Naive thymus-derived CD4-positive, alpha-beta T cell (primary cell): ENCODE measurements at regions of chr2 and their contacts with region 1.

Region 1: GRCh38 chr2:203706403-203706802 is at the start of gene CD28:
- DNase-seq: peak; percentile 59 to 96 (median 94)
- ATAC-seq: peak; percentile 90
- H3K4me3 ChIP-seq: peak within 1 kb of the TSS; percentile 70
- H3K4me3 Mint-ChIP-seq: peak within 1 kb of the TSS; percentile 82 to 97 (median 94)
- H3K27ac ChIP-seq: peak within 1 kb of the TSS; percentile 95
- H3K27ac Mint-ChIP-seq: peak within 1 kb of the TSS; percentile 92 to 99 (median 97)
- H3K4me1 ChIP-seq: peaks cover 30 to 39% of the 10 kb centered on the region in 2 donors
- H3K4me1 Mint-ChIP-seq: peaks cover 13 to 50% (median 41%) of the 10 kb centered on the region in 7 donors
- H3K27me3 ChIP-seq: no peaks in the 10 kb centered on the region
- H3K27me3 Mint-ChIP-seq: no peaks in the 10 kb centered on the region
- total RNA-seq, gene CD28: 66.7 to 224 (median 121) TPM

Region 2: GRCh38 chr2:203578759-203579643 is 127.4 kb before region 1 on chr2:
- CTCF ChIA-PET with region 1: no interaction called
- POLR2A ChIA-PET with region 1: no interaction called
- intact Hi-C with region 1: loop called in 1 of 2 experiments (anchors 1 kb)
- DNase-seq: peak in 1 of 9 donors; percentile 47
- ATAC-seq: no peak
- H3K4me3 ChIP-seq: no peak overlapping the region
- H3K4me3 Mint-ChIP-seq: peak overlapping the region in 1 of 10 donors; percentile 63
- H3K27ac ChIP-seq: no peak overlapping the region
- H3K27ac Mint-ChIP-seq: peak overlapping the region in 2 of 9 donors; percentile 8 to 47
- H3K4me1 ChIP-seq: peaks cover 0 to 2% of the 10 kb centered on the region in 2 donors
- H3K4me1 Mint-ChIP-seq: peaks cover 0 to 44% (median 0%) of the 10 kb centered on the region in 7 donors
- H3K27me3 ChIP-seq: no peaks in the 10 kb centered on the region
- H3K27me3 Mint-ChIP-seq: peaks cover 0 to 64% (median 0%) of the 10 kb centered on the region in 5 donors

Region 3: GRCh38 chr2:203683932-203684556 is 22.4 kb before region 1 on chr2:
- CTCF ChIA-PET with region 1: interaction called, 3 read pairs
- POLR2A ChIA-PET with region 1: interaction called, 5 read pairs
- intact Hi-C with region 1: loop called in 1 of 2 experiments (anchors 2 kb)
- DNase-seq: no peak
- ATAC-seq: peak; percentile 81
- H3K4me3 ChIP-seq: no peak overlapping the region
- H3K4me3 Mint-ChIP-seq: no peak overlapping the region
- H3K27ac ChIP-seq: no peak overlapping the region
- H3K27ac Mint-ChIP-seq: peak overlapping the region in 1 of 9 donors; percentile 4
- H3K4me1 ChIP-seq: peaks cover 3 to 18% of the 10 kb centered on the region in 2 donors
- H3K4me1 Mint-ChIP-seq: peaks cover 21 to 54% (median 32%) of the 10 kb centered on the region in 7 donors
- H3K27me3 ChIP-seq: no peaks in the 10 kb centered on the region
- H3K27me3 Mint-ChIP-seq: no peaks in the 10 kb centered on the region

Region 4: GRCh38 chr2:203730076-203730729 is 23.8 kb after region 1 on chr2:
- CTCF ChIA-PET with region 1: interaction called, 4 read pairs
- POLR2A ChIA-PET with region 1: interaction called, 15 read pairs
- intact Hi-C with region 1: loop called in 1 of 2 experiments (anchors 1 kb)
- DNase-seq: no peak
- ATAC-seq: peak; percentile 39
- H3K4me3 ChIP-seq: no peak overlapping the region
- H3K4me3 Mint-ChIP-seq: peak overlapping the region in 9 of 10 donors; percentile 23 to 81 (median 67)
- H3K27ac ChIP-seq: peak overlapping the region; percentile 43
- H3K27ac Mint-ChIP-seq: peak overlapping the region; percentile 86 to 95 (median 90)
- H3K4me1 ChIP-seq: peaks cover 64 to 82% of the 10 kb centered on the region in 2 donors
- H3K4me1 Mint-ChIP-seq: peaks cover 45 to 96% (median 91%) of the 10 kb centered on the region in 7 donors
- H3K27me3 ChIP-seq: no peaks in the 10 kb centered on the region
- H3K27me3 Mint-ChIP-seq: no peaks in the 10 kb centered on the region

Region 5: GRCh38 chr2:203804070-203804469 is 97.7 kb after region 1 on chr2:
- CTCF ChIA-PET with region 1: no interaction called
- POLR2A ChIA-PET with region 1: interaction called, 4 read pairs
- intact Hi-C with region 1: loop called in 1 of 2 experiments (anchors 2 kb)
- DNase-seq: peak in 8 of 9 donors; percentile 27 to 57 (median 42)
- ATAC-seq: peak; percentile 75
- H3K4me3 ChIP-seq: peak overlapping the region; percentile 12
- H3K4me3 Mint-ChIP-seq: peak overlapping the region; percentile 23 to 80 (median 63)
- H3K27ac ChIP-seq: peak overlapping the region; percentile 47
- H3K27ac Mint-ChIP-seq: peak overlapping the region; percentile 1 to 83 (median 76)
- H3K4me1 ChIP-seq: peaks cover 28 to 34% of the 10 kb centered on the region in 2 donors
- H3K4me1 Mint-ChIP-seq: peaks cover 27 to 83% (median 72%) of the 10 kb centered on the region in 7 donors
- H3K27me3 ChIP-seq: no peaks in the 10 kb centered on the region
- H3K27me3 Mint-ChIP-seq: peaks cover 0 to 3% (median 0%) of the 10 kb centered on the region in 5 donors

Region 6: DNA sequence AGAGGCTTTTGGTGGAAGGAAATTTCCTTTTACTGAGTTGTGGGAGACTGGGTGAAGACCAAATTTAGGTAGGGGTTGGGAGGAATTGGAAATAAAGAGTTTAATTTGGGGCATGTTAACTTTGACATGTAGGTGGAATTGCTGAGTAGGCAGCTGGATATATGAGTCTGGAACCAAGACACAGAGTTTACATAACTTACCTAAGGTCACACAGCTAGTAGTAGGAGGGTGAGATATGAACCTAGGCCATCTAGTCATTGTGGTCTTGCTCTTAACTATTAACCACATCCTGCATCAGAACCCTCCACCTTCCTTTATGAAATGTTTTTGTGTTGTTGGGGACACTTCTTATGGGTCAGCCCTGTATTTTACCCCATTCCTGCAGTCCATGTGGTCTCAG is 343.2 kb after region 1 on chr2:
- CTCF ChIA-PET with region 1: no interaction called
- POLR2A ChIA-PET with region 1: no interaction called
- intact Hi-C with region 1: no loop called
- DNase-seq: no peak
- ATAC-seq: peak; percentile 61
- H3K4me3 ChIP-seq: no peak overlapping the region
- H3K4me3 Mint-ChIP-seq: no peak overlapping the region
- H3K27ac ChIP-seq: no peak overlapping the region
- H3K27ac Mint-ChIP-seq: peak overlapping the region in 1 of 9 donors; percentile 2
- H3K4me1 ChIP-seq: no peaks in the 10 kb centered on the region
- H3K4me1 Mint-ChIP-seq: peaks cover 5 to 22% (median 10%) of the 10 kb centered on the region in 7 donors
- H3K27me3 ChIP-seq: no peaks in the 10 kb centered on the region
- H3K27me3 Mint-ChIP-seq: peaks cover 0 to 13% (median 0%) of the 10 kb centered on the region in 5 donors

Region 7: DNA sequence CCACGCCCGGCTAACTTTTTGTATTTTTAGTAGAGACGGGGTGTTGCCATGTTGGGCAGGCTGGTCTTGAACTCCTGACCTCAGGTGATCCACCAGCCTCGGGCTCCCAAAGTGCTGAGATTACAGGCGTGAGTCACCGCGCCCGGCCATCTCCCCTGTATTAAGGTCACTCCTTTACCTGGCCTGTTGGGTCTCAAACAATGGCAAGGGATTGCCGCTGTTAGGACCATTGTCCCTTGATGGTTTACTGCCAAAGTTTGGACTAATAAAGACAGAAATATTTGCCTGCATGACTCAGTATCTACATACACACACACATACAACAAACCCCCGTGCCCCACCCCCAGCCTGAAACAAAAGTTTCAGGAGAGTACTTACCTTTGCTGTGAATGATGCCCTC is 855.3 kb after region 1 on chr2:
- CTCF ChIA-PET with region 1: no interaction called
- POLR2A ChIA-PET with region 1: no interaction called
- intact Hi-C with region 1: no loop called
- DNase-seq: no peak
- ATAC-seq: no peak
- H3K4me3 ChIP-seq: no peak overlapping the region
- H3K4me3 Mint-ChIP-seq: no peak overlapping the region
- H3K27ac ChIP-seq: no peak overlapping the region
- H3K27ac Mint-ChIP-seq: no peak overlapping the region
- H3K4me1 ChIP-seq: no peaks in the 10 kb centered on the region
- H3K4me1 Mint-ChIP-seq: no peaks in the 10 kb centered on the region
- H3K27me3 ChIP-seq: no peaks in the 10 kb centered on the region
- H3K27me3 Mint-ChIP-seq: peaks cover 2 to 13% (median 10%) of the 10 kb centered on the region in 5 donors

Region 8: GRCh38 chr2:204608237-204608939 is 902.0 kb after region 1 on chr2:
- CTCF ChIA-PET with region 1: no interaction called
- POLR2A ChIA-PET with region 1: no interaction called
- intact Hi-C with region 1: no loop called
- DNase-seq: no peak
- ATAC-seq: no peak
- H3K4me3 ChIP-seq: no peak overlapping the region
- H3K4me3 Mint-ChIP-seq: no peak overlapping the region
- H3K27ac ChIP-seq: no peak overlapping the region
- H3K27ac Mint-ChIP-seq: no peak overlapping the region
- H3K4me1 ChIP-seq: no peaks in the 10 kb centered on the region
- H3K4me1 Mint-ChIP-seq: peaks cover 0 to 1% (median 0%) of the 10 kb centered on the region in 7 donors
- H3K27me3 ChIP-seq: no peaks in the 10 kb centered on the region
- H3K27me3 Mint-ChIP-seq: peaks cover 0 to 21% (median 7%) of the 10 kb centered on the region in 5 donors